Activated CD8-positive, alpha-beta T cell treated with anti-CD3 and anti-CD28 coated beads, Interleukin-2, amount 10 ng/mL, durations not matched to agents 7 days and 5 days (primary cell): ENCODE measurements at regions of chr17 and their contacts with region 1.

Region 1: DNA sequence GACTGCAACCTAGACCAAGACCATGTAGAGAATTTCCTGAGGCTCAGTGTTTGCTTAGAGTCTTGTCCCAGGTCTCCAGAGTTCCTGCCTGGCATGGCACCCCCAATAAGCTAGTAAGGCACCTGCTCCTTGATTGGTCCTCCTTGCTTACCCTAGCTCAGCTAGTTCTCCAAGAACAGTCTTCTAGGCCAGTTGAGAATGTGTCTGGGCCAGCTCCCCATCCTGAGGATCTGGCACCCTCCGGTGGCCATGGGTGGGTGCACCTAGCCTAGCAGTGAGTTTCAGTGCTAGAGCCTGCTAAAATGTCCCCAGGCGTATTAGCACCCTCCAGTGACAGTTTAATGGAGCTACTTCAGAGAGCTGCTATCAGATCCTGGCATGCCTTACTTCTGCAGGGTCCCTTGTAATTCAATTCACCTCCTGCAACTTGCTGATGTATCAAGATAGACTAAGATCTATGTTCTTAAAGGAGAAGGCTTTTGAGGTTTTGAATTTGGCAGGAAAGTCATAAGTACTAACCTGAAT is 44.4 kb upstream of the MED13 start:
- DNase-seq: peak; percentile 79
- ATAC-seq: peak; percentile 100
- H3K4me3 Mint-ChIP-seq: no peak overlapping the region
- H3K27ac Mint-ChIP-seq: no peak overlapping the region
- H3K4me1 Mint-ChIP-seq: no peaks in the 10 kb centered on the region
- H3K27me3 Mint-ChIP-seq: peaks cover 15% of the 10 kb centered on the region

Region 2: GRCh38 chr17:61635913-61636432 is 473.5 kb before region 1 on chr17:
- CTCF ChIA-PET with region 1: interaction called, 36 read pairs
- POLR2A ChIA-PET with region 1: no interaction called
- DNase-seq: peak; percentile 75
- ATAC-seq: no peak
- H3K4me3 Mint-ChIP-seq: no peak overlapping the region
- H3K27ac Mint-ChIP-seq: no peak overlapping the region
- H3K4me1 Mint-ChIP-seq: no peaks in the 10 kb centered on the region
- H3K27me3 Mint-ChIP-seq: peaks cover 59% of the 10 kb centered on the region

Region 3: DNA sequence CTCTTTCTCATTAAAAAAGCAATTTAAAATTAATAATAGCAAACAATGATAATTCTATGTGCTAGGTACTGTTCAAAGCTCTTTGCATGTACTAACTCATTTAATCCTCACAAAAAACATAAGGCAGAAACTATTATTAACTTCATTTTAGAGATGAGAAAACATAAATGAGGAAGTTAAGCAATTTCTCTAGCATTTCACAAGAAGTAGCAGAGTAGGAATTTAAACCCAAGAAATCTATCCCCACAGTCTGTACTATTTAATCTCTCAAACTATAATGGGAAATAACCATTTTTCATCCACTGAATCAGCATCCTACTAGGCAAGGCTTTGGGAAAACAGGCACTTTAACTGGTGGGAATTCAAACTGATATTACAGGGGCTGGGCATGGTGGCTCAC is 139.4 kb before region 1 on chr17:
- CTCF ChIA-PET with region 1: interaction called, 10 read pairs
- POLR2A ChIA-PET with region 1: interaction called, 4 read pairs
- DNase-seq: no peak
- ATAC-seq: no peak
- H3K4me3 Mint-ChIP-seq: no peak overlapping the region
- H3K27ac Mint-ChIP-seq: no peak overlapping the region
- H3K4me1 Mint-ChIP-seq: no peaks in the 10 kb centered on the region
- H3K27me3 Mint-ChIP-seq: no peaks in the 10 kb centered on the region

Region 4: DNA sequence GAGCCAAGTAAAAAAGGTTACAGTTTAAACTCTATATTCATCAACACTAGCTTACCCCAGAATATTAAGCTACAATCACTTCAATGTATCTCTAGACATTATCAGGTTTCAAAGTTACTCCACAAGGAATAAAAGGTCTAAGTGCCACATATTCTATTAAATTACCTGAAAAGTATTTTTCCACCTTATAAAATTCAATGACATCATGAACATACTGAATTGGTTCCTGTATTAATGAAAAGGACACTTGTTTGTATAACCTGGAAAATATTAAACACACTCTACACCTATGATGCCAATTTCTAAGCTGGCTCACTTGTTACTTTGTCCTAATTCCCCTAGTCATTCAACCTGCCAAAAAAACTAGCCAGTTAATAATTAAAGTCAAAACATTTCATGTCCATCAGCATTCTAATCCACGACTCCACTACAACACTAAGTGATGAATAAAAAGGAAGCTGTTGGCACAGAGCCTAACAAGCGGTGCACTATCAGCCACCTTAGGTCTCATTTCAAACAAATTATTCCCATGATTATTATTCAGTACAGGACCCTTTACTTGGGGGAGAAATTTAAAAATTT is 56.6 kb before region 1 on chr17:
- CTCF ChIA-PET with region 1: interaction called, 19 read pairs
- POLR2A ChIA-PET with region 1: no interaction called
- DNase-seq: no peak
- ATAC-seq: no peak
- H3K4me3 Mint-ChIP-seq: no peak overlapping the region
- H3K27ac Mint-ChIP-seq: no peak overlapping the region
- H3K4me1 Mint-ChIP-seq: peaks cover 15% of the 10 kb centered on the region
- H3K27me3 Mint-ChIP-seq: no peaks in the 10 kb centered on the region

Region 5: DNA sequence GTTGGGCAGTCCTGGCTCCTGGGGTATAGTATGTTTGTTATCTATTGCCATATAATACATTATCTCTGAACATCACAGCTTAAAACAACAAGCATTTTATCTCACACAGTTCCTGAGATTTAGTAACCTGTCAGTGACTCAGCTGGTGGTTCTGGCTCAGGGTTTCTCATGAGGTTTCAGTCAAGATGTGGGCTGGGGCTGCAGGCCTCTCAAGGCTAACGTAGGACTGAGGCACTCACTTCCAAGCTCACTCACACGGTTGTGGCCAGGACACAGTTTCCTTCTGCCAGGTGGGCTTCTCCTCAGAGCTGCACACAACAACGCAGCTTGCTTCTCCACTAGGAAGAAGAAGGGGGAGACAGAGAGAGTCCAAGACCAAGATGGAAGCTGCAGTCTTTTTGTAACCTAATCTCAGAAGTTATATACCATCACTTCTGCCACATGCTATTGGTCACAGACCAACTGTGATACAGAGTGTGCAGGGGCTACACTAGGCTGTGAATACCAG is 34.1 kb before region 1 on chr17:
- CTCF ChIA-PET with region 1: interaction called, 28 read pairs
- POLR2A ChIA-PET with region 1: no interaction called
- DNase-seq: no peak
- ATAC-seq: no peak
- H3K4me3 Mint-ChIP-seq: no peak overlapping the region
- H3K27ac Mint-ChIP-seq: no peak overlapping the region
- H3K4me1 Mint-ChIP-seq: peaks cover 3% of the 10 kb centered on the region
- H3K27me3 Mint-ChIP-seq: peaks cover 19% of the 10 kb centered on the region

Region 6: DNA sequence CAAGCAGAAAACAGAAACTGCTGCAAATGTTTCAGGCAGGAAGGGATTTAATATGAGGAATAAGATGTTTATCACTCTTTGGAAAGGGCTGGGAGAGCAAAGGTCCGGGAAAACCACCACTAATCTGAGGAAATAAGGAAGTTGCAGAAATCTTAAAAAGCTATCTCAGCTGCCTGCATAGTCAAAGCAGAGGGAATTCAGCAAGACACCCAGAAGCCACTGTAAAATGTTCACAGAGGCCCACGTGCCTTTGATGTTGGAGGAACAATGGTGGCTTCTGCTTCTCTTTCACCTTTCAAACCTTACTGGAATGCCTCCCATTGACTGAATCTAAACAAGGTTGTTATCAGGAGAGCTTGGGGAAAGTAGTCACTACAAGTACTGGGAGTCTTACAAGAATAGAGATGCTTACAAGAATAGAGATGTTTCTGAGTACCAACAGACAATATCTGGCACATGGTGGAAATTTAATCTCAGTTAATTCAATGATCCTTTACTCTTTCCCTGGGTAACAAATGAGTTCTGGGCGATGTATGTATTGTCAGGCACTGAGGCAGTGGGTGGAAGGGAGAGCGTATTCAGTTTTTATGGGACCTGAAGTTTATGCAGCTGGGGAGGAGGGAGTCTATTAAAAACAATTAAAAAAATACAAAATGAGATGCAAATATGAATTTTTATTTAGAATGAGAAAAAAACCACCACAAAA is 11.7 kb after region 1 on chr17:
- CTCF ChIA-PET with region 1: interaction called, 12 read pairs
- POLR2A ChIA-PET with region 1: no interaction called
- DNase-seq: no peak
- ATAC-seq: no peak
- H3K4me3 Mint-ChIP-seq: no peak overlapping the region
- H3K27ac Mint-ChIP-seq: no peak overlapping the region
- H3K4me1 Mint-ChIP-seq: peaks cover under 1% of the 10 kb centered on the region
- H3K27me3 Mint-ChIP-seq: peaks cover 19% of the 10 kb centered on the region

Region 7: DNA sequence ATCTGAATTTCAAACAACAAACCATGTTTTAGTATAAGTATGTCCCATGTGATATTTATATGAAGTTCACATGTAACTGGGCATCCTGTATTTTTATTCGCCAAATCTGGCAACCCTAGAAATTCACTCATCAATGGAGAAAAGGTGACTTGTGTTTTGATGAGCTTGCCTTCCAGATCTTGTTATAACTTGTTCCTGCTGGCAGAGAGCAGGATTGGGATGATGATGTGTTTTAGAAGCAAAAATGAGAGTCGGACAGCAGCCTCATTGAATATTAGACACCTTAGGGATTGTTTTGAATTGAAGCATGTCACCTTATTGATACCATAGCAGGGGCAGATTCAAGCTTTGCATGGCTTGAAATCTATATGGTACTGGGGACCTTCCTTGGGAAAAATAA is 41.0 kb after region 1 on chr17:
- CTCF ChIA-PET with region 1: no interaction called
- POLR2A ChIA-PET with region 1: no interaction called
- DNase-seq: no peak
- ATAC-seq: no peak
- H3K4me3 Mint-ChIP-seq: no peak overlapping the region
- H3K27ac Mint-ChIP-seq: no peak overlapping the region
- H3K4me1 Mint-ChIP-seq: no peaks in the 10 kb centered on the region
- H3K27me3 Mint-ChIP-seq: peaks cover 2% of the 10 kb centered on the region